Gastrocnemius medialis (tissue), 4 donors: ENCODE measurements at regions of chr11 and their contacts with region 1.

Region 1: DNA sequence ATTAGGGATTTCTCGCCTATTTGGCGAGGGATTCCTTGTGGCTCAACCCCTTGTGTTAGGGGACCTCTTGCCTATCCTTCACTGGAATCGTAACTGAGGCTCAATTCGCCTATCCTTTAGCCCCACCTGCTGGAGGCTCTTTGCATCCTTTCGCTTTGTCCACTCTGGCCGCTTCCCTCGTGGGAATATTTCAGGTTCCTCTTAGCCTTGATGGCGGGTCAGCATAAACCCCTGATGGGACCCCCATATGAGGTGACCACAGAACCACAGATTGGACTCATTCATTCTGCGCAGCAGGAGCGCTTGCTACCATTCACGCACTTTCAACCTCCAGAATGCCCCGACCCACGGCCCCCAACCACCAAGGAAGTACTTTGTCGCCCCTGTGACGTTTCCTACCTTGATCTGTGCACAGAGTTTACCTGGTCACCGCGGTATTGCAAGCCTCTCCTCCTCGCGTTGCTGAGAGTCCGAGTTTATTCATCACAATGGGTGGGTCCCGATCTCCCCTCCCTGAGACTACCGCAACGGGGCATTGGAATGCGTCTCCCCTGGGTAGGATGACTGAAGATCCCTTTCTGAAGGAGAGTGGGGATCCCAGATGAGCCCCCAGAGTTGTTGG is at the start of gene OR52N2:
- DNase-seq: peak; percentile 46 to 48
- ATAC-seq: peak; percentile 47 to 76
- H3K4me3 ChIP-seq: peak within 1 kb of the TSS; percentile 26 to 68 (median 58)
- H3K27ac ChIP-seq: peak within 1 kb of the TSS in 1 of 4 donors; percentile 22
- H3K4me1 ChIP-seq: no peaks in the 10 kb centered on the region
- H3K27me3 ChIP-seq: no peaks in the 10 kb centered on the region
- CTCF ChIP-seq: peak; percentile 48 to 83 (median 69)
- POLR2A ChIP-seq: no peak
- total RNA-seq, gene OR52N2: not detected

Region 2: GRCh38 chr11:4636962-4637661 is 1171.5 kb before region 1 on chr11 and contains the start of gene OR51D1:
- in situ Hi-C with region 1: loop called in 1 of 4 experiments (anchors 25 kb)
- intact Hi-C with region 1: no loop called
- DNase-seq: peak in 1 of 2 donors; percentile 45
- ATAC-seq: peak; percentile 72 to 88
- H3K4me3 ChIP-seq: peak within 1 kb of the TSS; percentile 27 to 49 (median 32)
- H3K27ac ChIP-seq: no peak within 1 kb of the TSS
- H3K4me1 ChIP-seq: no peaks in the 10 kb centered on the region
- H3K27me3 ChIP-seq: no peaks in the 10 kb centered on the region
- CTCF ChIP-seq: peak; percentile 42 to 88 (median 77)
- POLR2A ChIP-seq: no peak
- total RNA-seq, gene OR51D1: not detected

Region 3: GRCh38 chr11:5123802-5124521 is 684.6 kb before region 1 on chr11:
- in situ Hi-C with region 1: loop called in 1 of 4 experiments (anchors 25 kb)
- intact Hi-C with region 1: loop called (anchors 2 kb)
- DNase-seq: peak; percentile 6 to 25
- ATAC-seq: peak in 1 of 2 donors; percentile 60
- H3K4me3 ChIP-seq: no peak overlapping the region
- H3K27ac ChIP-seq: no peak overlapping the region
- H3K4me1 ChIP-seq: no peaks in the 10 kb centered on the region
- H3K27me3 ChIP-seq: no peaks in the 10 kb centered on the region
- CTCF ChIP-seq: peak in 4 of 5 experiments; percentile 40 to 66 (median 58)
- POLR2A ChIP-seq: no peak

Region 4: GRCh38 chr11:5476184-5476819 is 332.3 kb before region 1 on chr11:
- in situ Hi-C with region 1: loop called in 3 of 4 experiments (anchors 10 to 25 kb)
- intact Hi-C with region 1: loop called (anchors 2 kb)
- DNase-seq: no peak
- ATAC-seq: no peak
- H3K4me3 ChIP-seq: no peak overlapping the region
- H3K27ac ChIP-seq: no peak overlapping the region
- H3K4me1 ChIP-seq: no peaks in the 10 kb centered on the region
- H3K27me3 ChIP-seq: no peaks in the 10 kb centered on the region
- CTCF ChIP-seq: peak in 4 of 5 experiments; percentile 24 to 66 (median 42)
- POLR2A ChIP-seq: no peak

Region 5: GRCh38 chr11:5489576-5490357 is 318.8 kb before region 1 on chr11:
- in situ Hi-C with region 1: loop called in 2 of 4 experiments (anchors 10 to 25 kb)
- intact Hi-C with region 1: no loop called
- DNase-seq: no peak
- ATAC-seq: no peak
- H3K4me3 ChIP-seq: no peak overlapping the region
- H3K27ac ChIP-seq: no peak overlapping the region
- H3K4me1 ChIP-seq: no peaks in the 10 kb centered on the region
- H3K27me3 ChIP-seq: no peaks in the 10 kb centered on the region
- CTCF ChIP-seq: no peak
- POLR2A ChIP-seq: no peak

Region 6: GRCh38 chr11:5690216-5690615 is 118.4 kb before region 1 on chr11:
- in situ Hi-C with region 1: no loop called
- intact Hi-C with region 1: loop called (anchors 5 kb)
- DNase-seq: no peak
- ATAC-seq: peak in 1 of 2 donors; percentile 31
- H3K4me3 ChIP-seq: peak overlapping the region; percentile 39 to 53 (median 48)
- H3K27ac ChIP-seq: peak overlapping the region; percentile 63 to 84 (median 72)
- H3K4me1 ChIP-seq: peaks cover 2 to 11% of the 10 kb centered on the region in 2 donors
- H3K27me3 ChIP-seq: no peaks in the 10 kb centered on the region
- CTCF ChIP-seq: no peak
- POLR2A ChIP-seq: no peak

Region 7: DNA sequence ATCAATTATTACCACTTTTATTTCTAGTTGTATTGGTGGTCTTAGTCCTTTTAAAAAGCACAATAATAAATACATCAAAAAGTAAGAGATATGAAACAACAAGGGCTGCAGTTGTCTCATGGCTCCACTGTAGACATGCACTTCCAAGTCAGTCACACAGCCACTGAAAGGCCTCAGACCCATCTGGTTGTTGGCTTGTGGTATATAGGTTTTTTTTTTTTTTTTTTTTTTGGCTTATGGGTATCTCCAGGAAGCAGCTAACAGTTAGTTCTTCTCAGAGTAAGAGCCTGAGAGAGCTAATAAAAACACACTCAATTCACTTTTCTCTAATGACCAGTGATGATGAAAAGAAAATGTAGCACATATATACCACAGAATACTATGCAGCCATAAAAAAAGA is 39.1 kb after region 1 on chr11:
- in situ Hi-C with region 1: no loop called
- intact Hi-C with region 1: no loop called
- DNase-seq: no peak
- ATAC-seq: no peak
- H3K4me3 ChIP-seq: no peak overlapping the region
- H3K27ac ChIP-seq: no peak overlapping the region
- H3K4me1 ChIP-seq: no peaks in the 10 kb centered on the region
- H3K27me3 ChIP-seq: no peaks in the 10 kb centered on the region
- CTCF ChIP-seq: no peak
- POLR2A ChIP-seq: no peak